ENCODE measurements at regions of chr1 and their contacts with region 1.

Region 1: DNA sequence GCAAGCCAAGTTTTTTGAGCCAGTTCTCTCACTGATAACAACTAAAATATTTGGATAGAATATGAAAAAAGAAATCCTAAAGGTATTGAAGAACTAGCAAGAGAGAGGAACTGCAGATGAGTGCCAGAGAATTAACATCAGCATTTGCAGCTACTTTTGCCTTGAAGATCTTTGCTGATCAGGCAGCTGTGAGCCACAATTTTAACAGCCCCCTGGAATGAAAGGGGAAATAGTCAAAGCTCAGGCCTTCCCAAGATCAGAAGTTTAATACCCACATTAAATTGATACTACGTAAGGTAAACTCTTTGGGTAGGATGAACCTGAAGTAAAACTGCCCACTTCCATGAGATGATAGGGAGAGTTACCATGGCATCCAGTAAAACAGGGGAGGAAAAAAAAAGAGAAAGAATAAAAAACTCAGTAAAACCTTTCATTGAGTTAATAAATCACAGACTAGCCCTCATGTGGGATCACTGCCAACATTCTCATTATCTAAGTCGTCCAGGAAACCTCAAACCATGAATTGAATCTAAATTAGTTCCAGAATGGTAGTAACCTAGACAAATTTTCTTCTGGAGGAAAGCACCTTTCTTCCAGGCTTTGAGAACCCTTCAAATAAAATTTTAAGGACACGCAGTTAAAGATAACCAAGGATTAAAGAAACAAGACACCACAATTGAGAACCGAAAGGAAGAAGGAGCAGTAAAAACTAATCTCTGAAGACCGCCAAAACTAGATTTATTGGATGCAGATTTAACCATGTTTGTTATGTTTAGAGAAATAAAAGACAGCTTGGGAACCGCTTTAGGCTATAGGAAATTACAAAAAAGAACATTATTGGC is 28.3 kb downstream of the SCP2 start:
- DNase-seq: no peak
- ATAC-seq: no peak
- H3K4me3 ChIP-seq: no peak overlapping the region
- H3K27ac ChIP-seq: no peak overlapping the region
- H3K4me1 ChIP-seq: no peaks in the 10 kb centered on the region
- H3K27me3 ChIP-seq: no peaks in the 10 kb centered on the region
- CTCF ChIP-seq: no peak

Region 2: GRCh38 chr1:52306227-52307006 is 648.9 kb before region 1 on chr1:
- intact Hi-C with region 1: loop called in 1 of 2 experiments (anchors 10 kb)
- DNase-seq: no peak
- ATAC-seq: no peak
- H3K4me3 ChIP-seq: no peak overlapping the region
- H3K27ac ChIP-seq: no peak overlapping the region
- H3K4me1 ChIP-seq: no peaks in the 10 kb centered on the region
- H3K27me3 ChIP-seq: no peaks in the 10 kb centered on the region
- CTCF ChIP-seq: no peak